Mammary epithelial cell (primary cell): ENCODE measurements at regions of chr15 and their contacts with region 1.

Region 1: GRCh38 chr15:49155110-49155833 is at the start of gene COPS2:
- DNase-seq: peak; percentile 98
- H3K4me3 ChIP-seq: peak within 1 kb of the TSS; percentile 83 to 98 (median 97)
- H3K27ac ChIP-seq: peak within 1 kb of the TSS; percentile 86
- H3K4me1 ChIP-seq: peaks cover 13% of the 10 kb centered on the region
- H3K27me3 ChIP-seq: no peaks in the 10 kb centered on the region
- CTCF ChIP-seq: no peak
- total RNA-seq, gene COPS2: 44.7 to 88.3 TPM

Region 2: DNA sequence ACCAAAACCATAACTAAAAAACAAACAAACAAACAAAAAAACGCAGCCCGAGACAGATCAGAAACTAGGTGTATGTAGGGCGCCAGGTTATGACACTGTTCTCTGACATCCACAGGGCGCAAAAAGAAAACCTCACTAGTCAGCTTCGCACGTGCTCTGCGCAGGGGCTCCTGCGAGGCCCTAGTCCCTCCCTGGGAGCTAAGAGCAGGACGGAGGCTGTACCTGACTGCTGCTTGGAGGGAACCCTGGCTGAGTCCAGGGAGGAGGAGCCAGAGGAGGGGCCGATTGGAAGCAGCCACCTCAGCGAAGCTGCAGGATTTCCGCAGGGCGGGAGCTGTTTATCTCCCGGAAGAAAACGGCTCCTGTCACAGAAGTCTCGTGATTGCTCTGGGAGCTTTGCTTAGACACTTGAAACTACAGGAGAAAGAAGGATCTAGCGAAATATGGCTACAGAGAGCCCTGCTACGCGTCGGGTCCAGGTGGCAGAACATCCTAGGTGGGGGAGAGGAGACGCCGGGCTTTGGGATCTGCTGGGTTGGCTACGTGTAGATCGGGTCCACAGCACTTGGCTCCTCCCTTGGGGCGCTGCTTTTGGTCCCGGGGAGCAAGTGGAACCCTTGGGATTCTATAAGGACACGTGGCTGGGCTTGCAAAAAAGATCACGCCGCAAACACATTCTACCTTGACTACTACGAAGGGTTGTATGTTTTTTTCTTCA is 14.8 kb after region 1 on chr15 and contains the start of gene GALK2:
- CTCF ChIA-PET with region 1: no interaction called
- dilution Hi-C with region 1: no loop called
- in situ Hi-C with region 1: no loop called
- intact Hi-C with region 1: loop called (anchors 1 kb)
- DNase-seq: peak; percentile 89
- H3K4me3 ChIP-seq: peak within 1 kb of the TSS; percentile 77 to 83 (median 78)
- H3K27ac ChIP-seq: peak within 1 kb of the TSS; percentile 91
- H3K4me1 ChIP-seq: peaks cover 4% of the 10 kb centered on the region
- H3K27me3 ChIP-seq: no peaks in the 10 kb centered on the region
- CTCF ChIP-seq: no peak
- total RNA-seq, gene GALK2: 24.7 to 25.0 TPM

Region 3: GRCh38 chr15:49225613-49226281 is 70.5 kb after region 1 on chr15:
- CTCF ChIA-PET with region 1: no interaction called
- dilution Hi-C with region 1: no loop called
- in situ Hi-C with region 1: no loop called
- intact Hi-C with region 1: loop called (anchors 5 kb)
- DNase-seq: peak; percentile 46
- H3K4me3 ChIP-seq: no peak overlapping the region
- H3K27ac ChIP-seq: no peak overlapping the region
- H3K4me1 ChIP-seq: no peaks in the 10 kb centered on the region
- H3K27me3 ChIP-seq: no peaks in the 10 kb centered on the region
- CTCF ChIP-seq: peak; percentile 16 to 38

Region 4: DNA sequence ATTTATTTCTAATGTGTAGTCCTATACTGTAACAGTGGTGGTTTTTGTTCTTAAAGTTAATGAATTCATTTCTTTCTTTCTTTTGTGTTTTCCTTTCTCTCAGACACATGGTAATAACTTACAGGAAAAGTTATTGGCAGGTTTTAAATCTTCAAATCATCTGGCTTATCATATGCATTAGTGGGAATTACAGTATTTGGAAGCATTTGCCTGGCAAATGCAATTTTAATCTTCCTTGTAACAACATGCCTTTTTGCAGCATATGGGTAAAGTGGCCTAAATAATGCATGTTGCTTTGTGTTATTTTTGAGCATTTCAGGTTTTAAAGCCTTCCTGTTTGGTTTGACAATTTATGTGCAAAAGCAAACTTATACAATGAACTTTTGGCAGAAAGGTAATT is 81.6 kb after region 1 on chr15:
- CTCF ChIA-PET with region 1: no interaction called
- dilution Hi-C with region 1: no loop called
- in situ Hi-C with region 1: no loop called
- intact Hi-C with region 1: no loop called
- DNase-seq: no peak
- H3K4me3 ChIP-seq: no peak overlapping the region
- H3K27ac ChIP-seq: no peak overlapping the region
- H3K4me1 ChIP-seq: no peaks in the 10 kb centered on the region
- H3K27me3 ChIP-seq: no peaks in the 10 kb centered on the region
- CTCF ChIP-seq: no peak